Spleen (tissue), 13 donors: ENCODE measurements at regions of chr1 and their contacts with region 1.

Region 1: DNA sequence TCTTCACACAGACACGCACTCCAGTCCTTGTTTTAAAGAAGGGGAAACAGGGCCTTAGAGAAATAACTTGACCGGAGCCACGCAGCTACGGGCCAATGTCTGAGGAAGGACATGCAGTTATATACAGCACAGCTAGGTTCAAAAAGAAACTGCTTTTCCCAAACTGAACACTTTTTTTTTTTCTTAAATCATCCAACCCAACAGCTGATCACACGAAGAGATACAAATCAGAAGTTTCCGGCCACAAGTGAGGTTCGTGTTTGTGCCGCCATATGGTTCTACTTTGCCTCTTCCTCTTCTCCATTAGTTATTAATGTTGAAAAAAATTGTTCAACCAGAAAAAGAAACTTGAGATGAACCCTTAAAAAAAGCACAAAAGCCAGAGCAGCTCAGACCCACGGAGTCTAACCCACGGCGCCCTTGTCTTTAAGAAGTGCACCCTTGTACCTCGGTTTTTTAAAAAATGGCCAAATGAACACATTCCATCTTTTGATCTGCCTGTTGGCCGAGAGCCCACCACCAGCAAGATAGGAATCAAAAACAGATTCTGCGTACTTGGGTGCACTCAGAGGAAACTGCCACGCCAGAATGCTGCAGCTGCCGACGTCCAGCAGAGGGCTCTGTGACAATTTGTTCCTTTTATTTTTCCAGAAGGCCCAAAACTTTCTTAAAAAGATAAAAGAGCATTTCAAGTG is 78.9 kb downstream of the SLC66A1 start:
- DNase-seq: peak; percentile 79
- H3K4me3 ChIP-seq: peak overlapping the region in 3 of 8 donors; percentile 17 to 53 (median 27)
- H3K27ac ChIP-seq: peak overlapping the region; percentile 66 to 85 (median 74)
- H3K4me1 ChIP-seq: peaks cover 46 to 98% (median 81%) of the 10 kb centered on the region in 6 donors
- H3K27me3 ChIP-seq: no peaks in the 10 kb centered on the region
- CTCF ChIP-seq: peak; percentile 57 to 90 (median 80)
- POLR2A ChIP-seq: no peak

Region 2: GRCh38 chr1:17551755-17552234 is 1839.3 kb before region 1 on chr1:
- intact Hi-C with region 1: no loop called
- DNase-seq: no peak
- H3K4me3 ChIP-seq: no peak overlapping the region
- H3K27ac ChIP-seq: peak overlapping the region in 7 of 8 donors; percentile 37 to 73 (median 52)
- H3K4me1 ChIP-seq: peaks cover 4 to 47% (median 21%) of the 10 kb centered on the region in 6 donors
- H3K27me3 ChIP-seq: no peaks in the 10 kb centered on the region
- CTCF ChIP-seq: no peak
- POLR2A ChIP-seq: no peak

Region 3: DNA sequence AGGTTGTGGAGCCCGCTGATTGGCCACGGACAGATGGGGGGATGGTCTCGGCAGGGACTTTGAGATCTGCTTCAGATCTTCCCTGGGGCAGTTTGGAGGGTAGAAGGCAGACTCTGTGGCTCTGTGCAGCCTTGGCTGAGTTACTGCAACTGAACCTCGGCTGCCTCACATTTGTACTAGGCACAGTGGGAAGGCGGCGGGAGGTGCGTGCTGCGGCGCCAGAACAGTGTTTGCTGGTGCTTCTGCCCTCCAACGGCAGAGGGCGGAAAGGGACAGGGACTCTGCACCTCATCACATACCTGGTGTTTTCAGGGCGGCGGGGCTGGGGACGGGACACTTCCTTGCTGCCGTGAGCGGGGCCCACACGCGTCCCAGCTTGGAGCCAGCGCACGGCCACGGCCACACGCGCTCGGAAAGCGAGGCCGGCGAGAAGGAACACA is 52.7 kb before region 1 on chr1:
- intact Hi-C with region 1: no loop called
- DNase-seq: no peak
- H3K4me3 ChIP-seq: no peak overlapping the region
- H3K27ac ChIP-seq: no peak overlapping the region
- H3K4me1 ChIP-seq: peaks cover 0 to 16% (median 6%) of the 10 kb centered on the region in 6 donors
- H3K27me3 ChIP-seq: no peaks in the 10 kb centered on the region
- CTCF ChIP-seq: no peak
- POLR2A ChIP-seq: no peak

Region 4: GRCh38 chr1:19477284-19478249 is 86.5 kb after region 1 on chr1:
- intact Hi-C with region 1: loop called (anchors 5 kb)
- DNase-seq: peak; percentile 88
- H3K4me3 ChIP-seq: peak overlapping the region in 7 of 8 donors; percentile 2 to 59 (median 16)
- H3K27ac ChIP-seq: peak overlapping the region; percentile 81 to 100 (median 92)
- H3K4me1 ChIP-seq: peaks cover 70 to 100% (median 96%) of the 10 kb centered on the region in 6 donors
- H3K27me3 ChIP-seq: no peaks in the 10 kb centered on the region
- CTCF ChIP-seq: no peak
- POLR2A ChIP-seq: peak in 2 of 3 donors; percentile 15 to 52

Region 5: GRCh38 chr1:19514391-19514831 is 123.4 kb after region 1 on chr1:
- intact Hi-C with region 1: no loop called
- DNase-seq: no peak
- H3K4me3 ChIP-seq: no peak overlapping the region
- H3K27ac ChIP-seq: no peak overlapping the region
- H3K4me1 ChIP-seq: peaks cover 0 to 38% (median 16%) of the 10 kb centered on the region in 6 donors
- H3K27me3 ChIP-seq: no peaks in the 10 kb centered on the region
- CTCF ChIP-seq: no peak
- POLR2A ChIP-seq: no peak